ENCODE measurements at regions of chr6 and their contacts with region 1.

Region 1: DNA sequence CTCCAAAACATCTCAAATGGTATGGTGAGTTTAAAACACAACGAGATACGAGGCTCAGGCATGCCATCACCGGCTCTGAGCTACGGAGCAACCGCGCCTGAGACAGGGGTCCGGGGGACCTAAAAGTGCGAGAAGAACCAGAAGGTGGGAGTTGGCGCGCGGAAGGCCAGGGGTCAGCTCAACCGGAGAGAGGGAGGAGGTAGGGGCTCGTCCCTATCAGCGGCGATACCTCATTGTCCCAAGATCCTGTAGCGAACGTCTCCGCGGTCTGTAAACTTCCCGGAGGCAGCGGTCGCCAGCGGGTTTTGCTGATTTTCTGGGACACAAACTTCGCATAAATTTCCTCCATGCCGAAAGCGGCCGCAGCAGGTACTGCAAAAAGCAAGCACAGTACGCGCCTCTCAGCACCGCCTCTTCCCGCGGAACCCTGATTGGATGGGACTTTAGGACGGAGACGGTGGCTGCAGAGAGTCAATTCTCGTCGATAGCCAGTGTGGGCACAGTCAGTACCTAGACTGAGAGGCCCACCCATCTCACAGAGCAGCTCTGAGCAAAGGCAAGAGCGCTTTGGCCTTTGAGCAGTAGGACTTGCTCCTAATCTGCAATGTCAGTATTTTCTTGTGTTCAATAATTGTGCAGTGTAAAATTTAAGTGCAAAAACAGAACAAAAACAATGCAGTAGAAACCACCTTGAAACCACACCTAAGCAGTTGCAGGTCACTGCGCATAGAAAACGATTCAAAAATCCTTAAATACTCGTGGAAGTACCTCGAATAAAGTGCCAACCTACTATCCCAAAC is at the start of gene NUP43:
- DNase-seq: peak; percentile 75 to 91 (median 90)
- ATAC-seq: peak; percentile 80
- H3K4me3 ChIP-seq: peak within 1 kb of the TSS; percentile 77
- H3K4me3 Mint-ChIP-seq: peak within 1 kb of the TSS; percentile 93 to 99 (median 97)
- H3K27ac ChIP-seq: peak within 1 kb of the TSS; percentile 82
- H3K27ac Mint-ChIP-seq: peak within 1 kb of the TSS; percentile 86 to 97 (median 95)
- H3K4me1 ChIP-seq: peaks cover 17 to 26% of the 10 kb centered on the region in 2 donors
- H3K4me1 Mint-ChIP-seq: peaks cover 14 to 46% (median 32%) of the 10 kb centered on the region in 7 donors
- H3K27me3 ChIP-seq: no peaks in the 10 kb centered on the region
- H3K27me3 Mint-ChIP-seq: no peaks in the 10 kb centered on the region
- total RNA-seq, gene NUP43: 14.0 to 70.7 (median 60.2) TPM

Region 2: GRCh38 chr6:149648148-149649145 is 97.9 kb before region 1 on chr6 and contains the start of gene KATNA1:
- CTCF ChIA-PET with region 1: no interaction called
- POLR2A ChIA-PET with region 1: interaction called, 3 read pairs
- intact Hi-C with region 1: loop called (anchors 1 to 2 kb)
- DNase-seq: peak; percentile 69 to 95 (median 81)
- ATAC-seq: peak; percentile 96
- H3K4me3 ChIP-seq: peak within 1 kb of the TSS; percentile 91
- H3K4me3 Mint-ChIP-seq: peak within 1 kb of the TSS; percentile 83 to 96 (median 91)
- H3K27ac ChIP-seq: peak within 1 kb of the TSS; percentile 82
- H3K27ac Mint-ChIP-seq: peak within 1 kb of the TSS; percentile 82 to 95 (median 90)
- H3K4me1 ChIP-seq: peaks cover 7 to 17% of the 10 kb centered on the region in 2 donors
- H3K4me1 Mint-ChIP-seq: peaks cover 2 to 41% (median 33%) of the 10 kb centered on the region in 7 donors
- H3K27me3 ChIP-seq: no peaks in the 10 kb centered on the region
- H3K27me3 Mint-ChIP-seq: no peaks in the 10 kb centered on the region
- total RNA-seq, gene KATNA1: 14.1 to 22.6 (median 16.7) TPM

Region 3: DNA sequence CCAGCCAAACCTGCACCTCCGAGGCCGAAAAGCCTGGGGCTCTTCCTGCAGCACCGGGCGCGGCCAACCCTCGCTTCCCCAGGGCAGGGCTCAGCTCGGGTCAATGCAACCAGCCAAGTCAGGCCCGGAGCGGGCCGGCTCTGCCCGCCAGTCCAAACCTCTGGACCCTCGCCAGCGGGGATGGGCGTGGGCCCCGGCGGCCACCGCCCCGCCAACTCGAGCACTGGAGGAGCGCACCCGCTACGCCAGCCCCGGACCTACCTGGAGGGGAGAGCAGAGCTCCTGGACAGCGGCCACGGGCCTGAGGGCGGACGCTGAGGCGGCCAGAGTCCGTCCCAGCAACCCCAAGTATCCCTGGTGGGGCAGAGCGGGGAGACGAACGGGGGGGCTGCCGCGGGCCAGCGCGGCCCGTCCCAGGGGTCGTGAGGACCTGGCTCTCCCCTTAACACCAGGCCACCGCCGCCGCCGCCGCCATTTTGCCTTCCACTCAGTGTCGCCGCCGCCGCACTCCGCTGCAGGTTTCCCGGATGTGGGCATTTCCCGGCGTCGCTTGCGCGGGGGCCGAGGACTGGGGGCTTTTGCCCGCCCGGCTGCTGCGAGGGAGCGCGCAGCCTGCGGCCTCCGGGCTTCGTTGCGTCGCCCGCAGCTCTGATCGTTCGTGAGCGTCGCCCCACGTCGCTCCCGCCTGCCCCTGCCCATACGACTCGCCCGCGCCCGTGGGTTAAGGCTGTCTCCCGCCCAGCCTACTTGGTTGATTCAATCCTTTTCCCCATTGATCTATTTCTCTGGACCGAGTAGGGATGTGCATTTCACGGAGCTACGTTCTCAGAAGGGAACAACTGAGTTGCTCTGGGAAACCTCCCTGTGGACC is 28.5 kb before region 1 on chr6 and contains the start of gene LATS1:
- CTCF ChIA-PET with region 1: no interaction called
- POLR2A ChIA-PET with region 1: interaction called, 67 read pairs
- intact Hi-C with region 1: loop called (anchors 1 kb)
- DNase-seq: peak; percentile 76 to 96 (median 91)
- ATAC-seq: peak; percentile 96
- H3K4me3 ChIP-seq: peak within 1 kb of the TSS; percentile 72
- H3K4me3 Mint-ChIP-seq: peak within 1 kb of the TSS; percentile 89 to 99 (median 94)
- H3K27ac ChIP-seq: peak within 1 kb of the TSS; percentile 97
- H3K27ac Mint-ChIP-seq: peak within 1 kb of the TSS; percentile 95 to 99 (median 97)
- H3K4me1 ChIP-seq: peaks cover 11 to 19% of the 10 kb centered on the region in 2 donors
- H3K4me1 Mint-ChIP-seq: peaks cover 18 to 51% (median 44%) of the 10 kb centered on the region in 7 donors
- H3K27me3 ChIP-seq: no peaks in the 10 kb centered on the region
- H3K27me3 Mint-ChIP-seq: no peaks in the 10 kb centered on the region
- total RNA-seq, gene LATS1: 33.3 to 49.5 (median 44.6) TPM

Region 4: GRCh38 chr6:149723771-149724417 is 22.5 kb before region 1 on chr6:
- CTCF ChIA-PET with region 1: interaction called, 3 read pairs
- POLR2A ChIA-PET with region 1: interaction called, 67 read pairs
- intact Hi-C with region 1: loop called in 1 of 2 experiments (anchors 1 kb)
- DNase-seq: peak in 7 of 9 donors; percentile 29 to 50 (median 43)
- ATAC-seq: peak; percentile 93
- H3K4me3 ChIP-seq: no peak overlapping the region
- H3K4me3 Mint-ChIP-seq: no peak overlapping the region
- H3K27ac ChIP-seq: no peak overlapping the region
- H3K27ac Mint-ChIP-seq: peak overlapping the region in 4 of 9 donors; percentile 10 to 78 (median 34)
- H3K4me1 ChIP-seq: peaks cover 3 to 13% of the 10 kb centered on the region in 2 donors
- H3K4me1 Mint-ChIP-seq: peaks cover 16 to 30% (median 24%) of the 10 kb centered on the region in 7 donors
- H3K27me3 ChIP-seq: no peaks in the 10 kb centered on the region
- H3K27me3 Mint-ChIP-seq: no peaks in the 10 kb centered on the region

Region 5: DNA sequence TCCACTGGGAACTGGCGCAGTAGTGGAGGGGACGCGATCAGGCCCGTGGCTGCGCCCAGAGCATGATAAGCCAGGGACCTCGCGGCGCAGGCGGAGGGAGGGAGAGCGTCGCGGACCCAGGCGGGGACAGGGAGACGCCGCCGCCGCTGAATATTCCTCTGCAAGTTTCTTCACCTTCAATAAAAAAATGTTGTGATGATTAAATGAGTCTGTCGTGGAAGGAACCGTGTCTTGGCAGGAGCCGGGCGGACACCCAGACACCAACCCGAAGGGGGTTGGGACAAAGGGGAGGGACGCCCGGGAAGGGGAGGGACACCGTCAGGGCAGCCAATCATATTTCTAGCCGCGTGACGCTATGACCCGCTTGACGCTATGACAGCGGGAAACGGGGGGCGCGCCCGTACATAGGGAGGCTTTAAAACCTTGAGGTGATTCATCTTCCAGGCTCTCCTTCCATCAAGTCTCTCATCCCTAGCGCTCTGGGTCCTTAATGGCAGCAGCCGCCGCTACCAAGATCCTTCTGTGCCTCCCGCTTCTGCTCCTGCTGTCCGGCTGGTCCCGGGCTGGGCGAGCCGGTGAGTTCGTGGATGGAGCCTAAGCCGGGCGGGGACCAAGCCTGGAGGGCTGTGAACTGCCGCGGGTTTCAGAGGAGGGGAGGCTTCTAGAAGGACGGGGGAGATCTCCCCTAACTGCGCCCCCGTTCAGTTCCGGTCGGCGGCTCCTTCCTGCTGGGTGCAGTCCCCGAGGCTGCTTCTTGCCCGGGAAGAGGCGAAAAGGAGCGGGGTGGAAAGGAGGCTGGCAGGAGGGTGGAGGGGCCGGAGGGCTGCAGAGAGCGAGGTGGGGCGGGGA is 195.5 kb after region 1 on chr6 and contains the start of gene ULBP2:
- CTCF ChIA-PET with region 1: no interaction called
- POLR2A ChIA-PET with region 1: no interaction called
- intact Hi-C with region 1: loop called in 1 of 2 experiments (anchors 5 kb)
- DNase-seq: peak; percentile 69 to 94 (median 80)
- ATAC-seq: peak; percentile 94
- H3K4me3 ChIP-seq: peak within 1 kb of the TSS; percentile 58
- H3K4me3 Mint-ChIP-seq: peak within 1 kb of the TSS; percentile 78 to 96 (median 94)
- H3K27ac ChIP-seq: peak within 1 kb of the TSS; percentile 9
- H3K27ac Mint-ChIP-seq: peak within 1 kb of the TSS; percentile 74 to 91 (median 85)
- H3K4me1 ChIP-seq: peaks cover 14 to 20% of the 10 kb centered on the region in 2 donors
- H3K4me1 Mint-ChIP-seq: peaks cover 13 to 40% (median 31%) of the 10 kb centered on the region in 7 donors
- H3K27me3 ChIP-seq: peaks cover 25 to 35% of the 10 kb centered on the region in 2 donors
- H3K27me3 Mint-ChIP-seq: peaks cover 31 to 82% (median 44%) of the 10 kb centered on the region in 5 donors
- total RNA-seq, gene ULBP2: 0.27 to 1.0 (median 0.65) TPM in 4 of 5 experiments, not detected in the other

Region 6: DNA sequence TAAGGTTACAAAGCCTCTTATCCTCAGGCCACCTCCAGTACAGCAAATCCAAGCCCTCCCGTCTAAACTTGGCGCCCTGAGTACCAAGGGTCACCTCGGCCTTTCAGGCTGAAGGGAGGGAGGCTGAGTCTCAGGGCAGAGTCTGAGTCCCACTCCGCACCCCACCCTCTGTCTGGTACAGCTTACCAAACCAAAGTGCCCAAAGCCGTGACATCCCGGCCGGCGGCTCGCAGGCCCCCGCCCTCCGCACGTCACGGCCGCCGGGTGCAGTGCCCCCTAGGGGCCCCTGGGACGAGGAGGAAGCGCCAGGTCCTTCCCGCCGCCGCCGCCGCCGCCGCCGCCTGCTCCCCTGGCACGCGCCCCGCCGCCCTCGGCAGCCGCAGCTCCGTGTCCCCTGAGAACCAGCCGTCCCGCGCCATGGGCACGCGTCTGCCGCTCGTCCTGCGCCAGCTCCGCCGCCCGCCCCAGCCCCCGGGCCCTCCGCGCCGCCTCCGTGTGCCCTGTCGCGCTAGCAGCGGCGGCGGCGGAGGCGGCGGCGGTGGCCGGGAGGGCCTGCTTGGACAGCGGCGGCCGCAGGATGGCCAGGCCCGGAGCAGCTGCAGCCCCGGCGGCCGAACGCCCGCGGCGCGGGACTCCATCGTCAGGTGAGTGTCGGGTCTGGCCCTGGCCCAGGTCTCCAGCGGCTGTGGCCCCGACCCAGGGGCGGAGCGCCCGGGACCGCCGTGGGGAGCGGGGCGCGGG is 1119.2 kb after region 1 on chr6 and contains the start of gene MTHFD1L:
- CTCF ChIA-PET with region 1: no interaction called
- POLR2A ChIA-PET with region 1: no interaction called
- intact Hi-C with region 1: loop called in 1 of 2 experiments (anchors 5 kb)
- DNase-seq: peak; percentile 46 to 84 (median 55)
- ATAC-seq: peak; percentile 83
- H3K4me3 ChIP-seq: peak within 1 kb of the TSS; percentile 72
- H3K4me3 Mint-ChIP-seq: peak within 1 kb of the TSS; percentile 83 to 97 (median 88)
- H3K27ac ChIP-seq: peak within 1 kb of the TSS; percentile 61
- H3K27ac Mint-ChIP-seq: peak within 1 kb of the TSS in 8 of 9 donors; percentile 28 to 89 (median 70)
- H3K4me1 ChIP-seq: peaks cover 5 to 6% of the 10 kb centered on the region in 2 donors
- H3K4me1 Mint-ChIP-seq: peaks cover 10 to 44% (median 14%) of the 10 kb centered on the region in 7 donors
- H3K27me3 ChIP-seq: no peaks in the 10 kb centered on the region
- H3K27me3 Mint-ChIP-seq: peaks cover 8 to 18% (median 16%) of the 10 kb centered on the region in 5 donors
- total RNA-seq, gene MTHFD1L: 6.4 to 57.8 (median 9.3) TPM